Activated CD8-positive, alpha-beta T cell treated with anti-CD3 and anti-CD28 coated beads for 36 hours (primary cell): ENCODE measurements at regions of chr1 and their contacts with region 1.

Region 1: GRCh38 chr1:2174348-2175054 is 20.1 kb downstream of the FAAP20 start:
- DNase-seq: peak; percentile 46
- ATAC-seq: peak; percentile 75
- H3K4me3 Mint-ChIP-seq: peak overlapping the region; percentile 38
- H3K27ac Mint-ChIP-seq: peak overlapping the region; percentile 20
- H3K4me1 Mint-ChIP-seq: peaks cover 3% of the 10 kb centered on the region
- H3K27me3 Mint-ChIP-seq: no peaks in the 10 kb centered on the region
- CTCF ChIP-seq: peak; percentile 90

Region 2: DNA sequence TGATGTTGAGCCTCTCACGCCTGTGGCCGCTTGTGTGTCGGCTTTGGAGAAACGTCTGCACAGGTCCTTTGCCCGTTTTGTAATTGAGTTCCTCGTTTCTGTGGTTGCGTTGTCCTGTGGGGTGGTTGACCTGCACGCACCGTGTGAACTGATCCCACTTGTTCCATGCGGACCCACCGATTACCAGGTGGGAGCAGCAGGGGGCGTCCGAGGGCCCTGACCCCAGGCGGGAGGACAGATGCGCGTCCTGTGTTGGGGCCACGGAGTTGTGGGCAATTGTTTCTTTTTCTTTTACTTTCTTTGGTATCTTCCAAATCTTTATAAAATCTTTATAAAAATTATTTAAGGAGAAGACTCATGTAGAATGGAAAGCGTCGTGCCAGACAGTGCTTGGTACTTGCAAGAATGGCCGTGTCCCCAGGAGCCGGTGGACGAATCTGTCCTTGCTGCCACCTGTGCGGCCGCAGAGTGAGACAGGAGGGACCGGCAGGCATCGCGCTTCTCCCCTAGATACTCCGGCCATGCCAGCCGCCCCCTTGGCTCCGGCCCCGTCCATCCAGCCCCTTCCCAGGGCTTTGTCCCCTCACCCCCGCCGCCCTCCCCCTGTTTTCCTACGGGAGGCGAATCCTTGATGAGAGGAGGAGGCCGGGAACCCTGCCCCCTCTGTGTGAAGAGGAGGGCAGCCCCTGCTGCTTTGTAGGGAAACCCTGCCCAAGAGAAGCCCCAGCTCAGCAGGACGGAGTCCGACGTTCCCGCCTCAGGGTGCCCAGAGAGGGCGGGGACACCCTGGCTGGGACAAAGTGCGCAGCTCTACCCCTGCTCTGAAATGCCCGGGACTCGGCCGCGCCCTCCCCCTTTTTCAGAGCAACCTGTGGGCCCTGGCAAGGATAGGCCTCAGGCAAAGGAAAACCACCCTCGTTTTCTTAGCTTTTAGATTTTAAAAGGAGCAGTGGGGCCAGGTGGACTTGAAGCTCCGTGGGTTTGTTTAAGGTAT is 82.6 kb before region 1 on chr1:
- CTCF ChIA-PET with region 1: interaction called, 13 read pairs
- POLR2A ChIA-PET with region 1: no interaction called
- intact Hi-C with region 1: no loop called
- DNase-seq: peak; percentile 74
- ATAC-seq: peak; percentile 80
- H3K4me3 Mint-ChIP-seq: no peak overlapping the region
- H3K27ac Mint-ChIP-seq: no peak overlapping the region
- H3K4me1 Mint-ChIP-seq: peaks cover 2% of the 10 kb centered on the region
- H3K27me3 Mint-ChIP-seq: no peaks in the 10 kb centered on the region
- CTCF ChIP-seq: peak; percentile 80

Region 3: DNA sequence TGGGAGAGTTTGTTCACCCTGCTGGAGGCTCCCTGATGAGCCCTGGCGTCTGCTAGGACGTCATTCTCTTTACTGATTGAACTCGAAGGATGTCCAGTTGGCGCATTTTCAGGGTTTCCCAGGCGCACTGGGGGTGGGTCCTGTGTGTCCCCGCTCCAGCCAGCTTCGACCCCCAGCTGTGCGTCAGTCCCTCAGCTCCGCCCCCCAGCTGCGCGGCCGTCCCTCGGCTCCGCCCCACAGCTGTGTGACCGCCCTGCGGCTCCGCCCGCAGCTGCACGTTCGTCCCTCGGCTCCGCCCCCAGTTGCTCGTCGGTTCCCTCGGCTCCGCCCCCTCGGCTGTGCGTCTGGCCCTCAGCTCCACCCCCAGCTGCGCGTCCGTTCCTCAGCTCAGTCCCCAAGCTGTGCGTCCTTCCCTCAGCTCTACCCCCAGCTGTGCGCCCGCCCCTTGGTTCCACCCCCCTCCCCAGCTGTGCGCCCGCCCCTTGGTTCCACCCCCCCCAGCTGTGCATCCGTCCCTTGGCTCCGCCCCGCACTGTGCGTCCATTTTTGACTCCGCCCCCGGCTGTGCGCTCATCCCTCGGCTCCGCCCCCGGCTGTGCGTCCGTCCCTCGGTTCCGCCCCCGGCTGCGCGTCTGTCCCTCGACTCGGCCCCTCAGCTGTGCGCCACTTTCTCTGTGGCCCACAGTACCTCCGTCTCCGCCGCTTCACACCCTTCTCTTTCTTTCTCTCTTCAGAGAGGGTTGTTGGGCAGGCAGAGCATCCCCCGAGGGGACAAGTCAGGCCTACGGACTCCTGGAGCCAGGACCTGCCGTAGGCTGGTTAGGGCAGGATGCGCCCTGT is 41.2 kb before region 1 on chr1:
- CTCF ChIA-PET with region 1: interaction called, 11 read pairs
- POLR2A ChIA-PET with region 1: no interaction called
- intact Hi-C with region 1: no loop called
- DNase-seq: peak; percentile 98
- ATAC-seq: peak; percentile 93
- H3K4me3 Mint-ChIP-seq: peak overlapping the region; percentile 73
- H3K27ac Mint-ChIP-seq: peak overlapping the region; percentile 80
- H3K4me1 Mint-ChIP-seq: peaks cover 17% of the 10 kb centered on the region
- H3K27me3 Mint-ChIP-seq: no peaks in the 10 kb centered on the region
- CTCF ChIP-seq: no peak

Region 4: DNA sequence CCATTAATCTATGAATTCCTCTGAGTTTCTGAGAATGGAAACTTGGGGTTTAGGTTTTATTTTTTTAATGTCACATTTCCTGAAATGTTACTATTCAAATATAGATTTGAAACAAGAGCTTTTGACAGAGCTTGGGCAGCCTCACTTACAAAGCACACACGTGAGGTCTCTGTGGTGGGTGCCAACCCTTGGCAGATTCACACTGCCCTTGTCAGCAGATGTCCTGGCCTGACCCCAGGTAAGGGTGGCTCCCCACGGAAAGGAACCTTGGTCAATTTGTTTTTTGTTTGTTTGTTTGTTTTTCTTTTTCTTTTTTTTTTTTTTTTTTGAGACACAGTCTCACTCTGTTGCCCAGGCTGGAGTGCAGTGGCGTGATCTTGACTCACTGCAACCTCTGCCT is 33.5 kb before region 1 on chr1:
- CTCF ChIA-PET with region 1: interaction called, 26 read pairs
- POLR2A ChIA-PET with region 1: no interaction called
- intact Hi-C with region 1: no loop called
- DNase-seq: no peak
- ATAC-seq: peak; percentile 35
- H3K4me3 Mint-ChIP-seq: no peak overlapping the region
- H3K27ac Mint-ChIP-seq: no peak overlapping the region
- H3K4me1 Mint-ChIP-seq: peaks cover 22% of the 10 kb centered on the region
- H3K27me3 Mint-ChIP-seq: no peaks in the 10 kb centered on the region
- CTCF ChIP-seq: no peak

Region 5: DNA sequence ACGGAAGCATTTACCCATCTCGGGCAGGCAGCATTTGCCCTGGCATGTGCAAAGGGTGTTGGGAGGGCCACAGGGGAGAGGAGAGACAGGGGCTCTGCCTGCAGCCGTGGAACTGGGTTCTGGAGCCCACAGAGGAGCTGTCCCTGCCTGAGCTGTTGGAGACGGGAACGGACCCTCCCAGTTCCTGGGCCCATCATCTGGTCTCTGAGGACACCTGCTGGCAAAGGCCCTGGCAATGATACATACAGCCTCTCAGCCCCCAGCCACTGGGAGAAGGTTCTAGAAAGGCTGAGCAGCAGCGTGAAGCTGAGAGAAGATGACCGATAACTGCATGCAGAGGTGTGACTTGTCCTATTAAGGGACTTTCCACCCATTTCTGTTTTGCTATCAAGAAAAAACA is 11.3 kb before region 1 on chr1:
- CTCF ChIA-PET with region 1: interaction called, 30 read pairs
- POLR2A ChIA-PET with region 1: no interaction called
- intact Hi-C with region 1: no loop called
- DNase-seq: peak; percentile 46
- ATAC-seq: peak; percentile 51
- H3K4me3 Mint-ChIP-seq: no peak overlapping the region
- H3K27ac Mint-ChIP-seq: no peak overlapping the region
- H3K4me1 Mint-ChIP-seq: peaks cover 11% of the 10 kb centered on the region
- H3K27me3 Mint-ChIP-seq: no peaks in the 10 kb centered on the region
- CTCF ChIP-seq: peak; percentile 28

Region 6: DNA sequence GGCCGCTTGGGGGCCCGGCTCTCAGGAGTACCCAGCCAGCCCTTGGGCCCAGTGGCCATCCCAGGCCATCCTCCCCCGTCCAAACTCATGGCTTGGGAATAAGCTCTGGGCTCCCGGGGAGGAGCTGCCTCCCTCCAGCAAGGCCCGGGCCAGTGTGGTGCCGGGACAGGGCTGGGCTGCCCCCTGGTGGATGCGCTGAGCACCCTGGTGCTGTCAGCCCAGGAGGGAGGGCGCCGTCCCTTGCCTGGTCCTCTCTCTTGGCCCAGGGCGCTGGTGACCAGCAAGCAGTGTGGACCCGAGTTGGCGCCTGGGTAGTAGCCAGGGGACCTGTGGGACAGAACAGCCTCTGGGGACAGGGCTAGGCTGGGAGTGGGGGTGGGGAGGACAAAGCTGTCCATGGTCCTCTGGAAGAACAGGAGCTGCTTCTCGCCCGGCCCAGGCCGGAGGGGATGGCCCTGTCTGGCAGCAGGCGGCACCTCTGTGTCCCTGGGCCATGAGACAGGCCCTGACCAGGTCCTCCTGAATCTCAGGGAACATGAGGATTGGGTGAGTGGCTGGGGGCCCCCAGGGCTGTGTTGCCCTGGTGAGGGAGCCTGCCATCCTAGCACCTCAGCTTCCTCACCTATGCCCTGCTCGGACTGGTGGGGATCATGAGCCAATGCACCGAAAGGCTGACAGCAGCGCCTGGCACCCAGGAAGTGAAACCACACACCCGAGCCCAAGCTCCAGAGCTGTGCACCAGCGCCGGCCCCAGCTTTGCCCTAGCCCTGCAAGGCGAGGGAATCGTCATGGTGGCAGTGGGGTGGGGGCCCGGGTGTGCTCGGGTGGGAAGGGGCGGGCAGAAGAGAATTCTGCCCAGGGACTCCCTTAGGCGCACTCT is 207.5 kb after region 1 on chr1:
- CTCF ChIA-PET with region 1: interaction called, 21 read pairs
- POLR2A ChIA-PET with region 1: no interaction called
- intact Hi-C with region 1: no loop called
- DNase-seq: peak; percentile 81
- ATAC-seq: peak; percentile 99
- H3K4me3 Mint-ChIP-seq: no peak overlapping the region
- H3K27ac Mint-ChIP-seq: no peak overlapping the region
- H3K4me1 Mint-ChIP-seq: no peaks in the 10 kb centered on the region
- H3K27me3 Mint-ChIP-seq: no peaks in the 10 kb centered on the region
- CTCF ChIP-seq: peak; percentile 94